ENCODE measurements at regions of chr18 and their contacts with region 1.

Region 1: GRCh38 chr18:3129053-3129864 is 90.5 kb downstream of the MYOM1 start:
- DNase-seq: peak; percentile 72 to 89
- H3K4me3 ChIP-seq: no peak overlapping the region
- H3K27ac ChIP-seq: no peak overlapping the region
- H3K4me1 ChIP-seq: no peaks in the 10 kb centered on the region
- H3K27me3 ChIP-seq: no peaks in the 10 kb centered on the region
- CTCF ChIP-seq: peak; percentile 95 to 96 (median 96)
- EP300 ChIP-seq: peak in 1 of 2 experiments; percentile 70; a peak in 1 of 3 replicates
- POLR2A ChIP-seq: no peak
- RAD21 ChIP-seq: peak; percentile 74 to 81

Region 2: GRCh38 chr18:2878656-2879330 is 250.5 kb before region 1 on chr18:
- CTCF ChIA-PET with region 1: no interaction called
- POLR2A ChIA-PET with region 1: no interaction called
- DNase-seq: no peak
- H3K4me3 ChIP-seq: no peak overlapping the region
- H3K27ac ChIP-seq: no peak overlapping the region
- H3K4me1 ChIP-seq: no peaks in the 10 kb centered on the region
- H3K27me3 ChIP-seq: no peaks in the 10 kb centered on the region
- CTCF ChIP-seq: no peak
- EP300 ChIP-seq: no peak
- POLR2A ChIP-seq: no peak
- RAD21 ChIP-seq: no peak

Region 3: GRCh38 chr18:2932247-2933181 is 196.7 kb before region 1 on chr18:
- CTCF ChIA-PET with region 1: interaction called, 16 read pairs
- POLR2A ChIA-PET with region 1: no interaction called
- DNase-seq: peak in 1 of 2 experiments; percentile 63
- H3K4me3 ChIP-seq: no peak overlapping the region
- H3K27ac ChIP-seq: no peak overlapping the region; the same call in 1 of the 2 replicates
- H3K4me1 ChIP-seq: peaks cover 2 to 6% (median 5%) of the 10 kb centered on the region in 4 experiments; a peak in 4 of 7 replicates
- H3K27me3 ChIP-seq: no peaks in the 10 kb centered on the region
- CTCF ChIP-seq: peak in 2 of 3 experiments; percentile 50 to 57; a peak in 2 of 4 replicates
- EP300 ChIP-seq: no peak
- POLR2A ChIP-seq: no peak
- RAD21 ChIP-seq: peak; percentile 76 to 80

Region 4: DNA sequence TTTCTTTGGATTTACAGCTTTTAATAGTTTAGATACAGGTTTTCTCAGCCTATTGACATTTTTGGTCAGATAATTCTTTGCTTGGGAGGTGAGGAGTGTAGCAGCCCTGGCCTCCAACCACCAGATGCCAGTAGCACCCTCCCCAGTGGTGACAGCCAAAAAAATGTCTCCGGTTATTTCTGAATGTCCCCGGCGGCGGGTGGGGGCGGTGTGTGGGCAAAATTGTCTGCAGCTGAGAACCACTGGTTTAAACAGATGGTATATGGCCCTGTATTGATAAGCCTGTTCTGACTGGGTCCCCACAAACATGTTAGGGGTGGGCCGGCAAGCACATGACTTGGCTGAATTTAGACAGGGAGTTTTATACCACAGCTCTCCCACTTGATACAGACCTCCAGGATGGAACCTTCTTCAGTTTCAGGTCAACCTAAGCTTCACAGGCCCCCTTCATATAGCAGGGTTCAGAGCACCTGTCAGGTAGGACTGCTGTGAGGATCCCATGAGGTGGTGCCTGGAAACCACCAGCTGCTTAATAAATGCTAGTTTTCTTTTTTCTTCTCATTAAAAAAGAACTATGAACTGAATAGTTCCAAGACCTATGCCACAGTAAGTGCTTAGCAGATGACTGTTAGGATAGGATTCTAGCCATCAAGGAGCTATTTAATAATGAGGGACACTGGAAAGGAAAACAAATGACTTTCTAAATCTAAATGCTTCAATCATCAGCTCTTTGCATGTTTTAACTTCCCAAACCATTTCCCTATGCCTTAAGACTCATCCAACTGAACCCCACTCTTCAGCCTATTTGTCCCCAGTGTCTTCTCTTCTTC is 134.4 kb before region 1 on chr18:
- CTCF ChIA-PET with region 1: interaction called, 18 read pairs
- POLR2A ChIA-PET with region 1: no interaction called
- DNase-seq: peak in 1 of 2 experiments; percentile 52
- H3K4me3 ChIP-seq: no peak overlapping the region
- H3K27ac ChIP-seq: no peak overlapping the region
- H3K4me1 ChIP-seq: peaks cover 2 to 14% (median 9%) of the 10 kb centered on the region in 4 experiments
- H3K27me3 ChIP-seq: no peaks in the 10 kb centered on the region
- CTCF ChIP-seq: peak; percentile 50 to 59 (median 50)
- EP300 ChIP-seq: no peak
- POLR2A ChIP-seq: no peak
- RAD21 ChIP-seq: peak; percentile 56 to 73; a peak in 3 of 4 replicates

Region 5: DNA sequence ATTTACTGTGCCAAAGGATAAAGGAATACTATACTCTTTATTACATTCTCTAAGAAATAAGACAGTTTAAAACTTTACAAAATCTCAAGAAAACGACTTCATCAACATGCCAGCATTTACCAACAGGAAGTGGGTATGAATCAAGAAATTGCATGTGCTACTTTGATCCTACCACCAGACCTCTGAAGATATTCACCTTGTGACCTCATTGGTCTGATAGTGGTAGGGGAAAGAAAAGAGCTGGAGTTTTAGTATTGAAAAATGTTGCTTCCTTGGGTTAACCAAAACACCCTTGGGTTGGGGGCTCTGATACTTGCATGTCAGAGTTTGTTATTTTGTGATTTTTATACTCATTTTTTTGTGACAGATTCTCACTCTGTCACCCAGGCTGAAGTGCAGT is 32.2 kb before region 1 on chr18:
- CTCF ChIA-PET with region 1: interaction called, 10 read pairs
- POLR2A ChIA-PET with region 1: no interaction called
- DNase-seq: no peak
- H3K4me3 ChIP-seq: no peak overlapping the region
- H3K27ac ChIP-seq: no peak overlapping the region
- H3K4me1 ChIP-seq: peaks cover 0 to 5% (median 1%) of the 10 kb centered on the region in 4 experiments; a peak in 1 of 7 replicates
- H3K27me3 ChIP-seq: peaks cover 0 to 1% (median 0%) of the 10 kb centered on the region in 4 experiments; a peak in 1 of 7 replicates
- CTCF ChIP-seq: no peak
- EP300 ChIP-seq: no peak
- POLR2A ChIP-seq: no peak
- RAD21 ChIP-seq: no peak

Region 6: DNA sequence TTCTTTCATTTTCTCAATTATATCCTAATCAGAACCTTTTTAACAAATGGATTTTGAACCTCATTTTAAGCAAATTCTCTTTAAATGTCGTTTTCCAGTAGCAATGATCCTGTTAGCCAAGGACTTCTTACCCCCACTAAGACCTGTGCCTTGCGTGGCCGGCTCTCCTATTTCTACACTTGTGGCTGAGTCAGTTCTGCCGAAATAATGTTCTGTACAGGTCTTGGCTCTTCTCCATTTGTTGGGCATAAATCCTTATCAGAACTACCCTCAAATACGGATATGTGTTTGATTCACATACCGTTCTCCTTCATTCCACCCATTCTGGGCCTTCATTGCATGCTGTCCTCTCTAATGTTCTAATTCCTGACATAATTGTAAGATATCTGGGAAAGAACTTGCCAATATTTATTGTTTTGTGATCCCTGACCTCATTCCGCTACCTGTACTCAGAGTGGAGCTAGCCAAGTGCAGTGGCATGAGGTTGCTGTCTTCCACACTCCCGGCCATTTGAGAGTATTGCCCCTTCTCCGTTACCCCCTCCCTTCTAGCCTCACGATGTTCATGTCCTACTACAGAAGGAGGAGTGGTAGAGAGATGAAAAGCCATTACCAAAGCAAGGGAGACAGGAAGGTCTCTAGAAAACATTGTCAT is 11.9 kb after region 1 on chr18:
- CTCF ChIA-PET with region 1: interaction called, 14 read pairs
- POLR2A ChIA-PET with region 1: no interaction called
- DNase-seq: no peak
- H3K4me3 ChIP-seq: no peak overlapping the region
- H3K27ac ChIP-seq: no peak overlapping the region
- H3K4me1 ChIP-seq: no peaks in the 10 kb centered on the region
- H3K27me3 ChIP-seq: no peaks in the 10 kb centered on the region
- CTCF ChIP-seq: no peak
- EP300 ChIP-seq: no peak
- POLR2A ChIP-seq: no peak
- RAD21 ChIP-seq: no peak

Region 7: DNA sequence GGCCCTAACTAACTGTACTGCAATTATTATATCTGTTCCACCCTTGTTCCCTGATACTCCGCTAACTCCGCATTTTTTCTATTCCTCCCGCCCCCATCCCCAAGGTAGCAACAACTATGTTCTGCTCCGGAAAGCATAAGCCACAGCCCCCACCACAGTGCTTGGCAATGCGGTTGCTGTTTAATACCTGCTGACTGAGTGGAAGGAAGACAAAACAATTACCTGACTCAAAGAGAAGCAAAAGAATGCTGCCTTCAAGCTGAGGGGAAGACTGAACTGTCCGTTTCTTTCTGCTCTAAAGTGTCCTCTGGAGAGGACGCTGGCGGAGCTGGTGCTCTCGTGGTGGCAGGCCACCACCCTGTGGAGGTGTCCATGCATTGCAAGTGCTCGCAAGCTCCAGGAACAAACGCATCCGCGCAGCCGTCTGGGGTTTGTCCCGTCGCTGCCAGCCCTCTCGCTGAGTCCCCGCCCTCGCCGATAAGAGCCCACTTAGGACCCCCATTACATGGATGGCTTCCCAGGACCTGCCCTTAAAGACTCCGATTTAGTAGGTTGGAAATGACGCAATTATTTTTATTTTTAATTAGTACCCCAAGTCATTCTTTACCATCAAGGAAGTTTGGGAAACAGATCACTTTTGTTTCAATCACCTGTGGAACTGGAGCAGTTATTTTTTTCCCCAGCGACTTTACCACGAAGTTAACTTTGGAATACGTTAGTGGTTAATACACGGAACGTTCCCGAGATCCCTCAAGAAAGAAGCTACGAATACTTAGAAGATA is 116.8 kb after region 1 on chr18:
- CTCF ChIA-PET with region 1: interaction called, 14 read pairs
- POLR2A ChIA-PET with region 1: interaction called, 6 read pairs
- DNase-seq: peak; percentile 81 to 85
- H3K4me3 ChIP-seq: peak overlapping the region; percentile 45 to 91 (median 54); a peak in 7 of 8 replicates
- H3K27ac ChIP-seq: no peak overlapping the region
- H3K4me1 ChIP-seq: peaks cover 0 to 9% (median 1%) of the 10 kb centered on the region in 4 experiments; a peak in 2 of 7 replicates
- H3K27me3 ChIP-seq: no peaks in the 10 kb centered on the region
- CTCF ChIP-seq: peak; percentile 88 to 94 (median 94)
- EP300 ChIP-seq: 0 out of 3 replicates have a peak, but pooled peaks of 1 of the 2 experiments have one; percentile 19
- POLR2A ChIP-seq: peak in 1 of 2 experiments; percentile 49; a peak in 1 of 3 replicates
- RAD21 ChIP-seq: peak; percentile 99 to 100